MCF 10A (cell line): ENCODE measurements at regions of chr21 and their contacts with region 1.

Region 1: GRCh38 chr21:41630249-41630648 is 122.3 kb upstream of the TMPRSS2 start:
- DNase-seq: peak; percentile 100
- H3K4me3 Mint-ChIP-seq: peak overlapping the region; percentile 12
- H3K27ac Mint-ChIP-seq: peak overlapping the region; percentile 50
- H3K4me1 Mint-ChIP-seq: peaks cover 31% of the 10 kb centered on the region
- H3K27me3 Mint-ChIP-seq: no peaks in the 10 kb centered on the region
- CTCF ChIP-seq: no peak

Region 2: DNA sequence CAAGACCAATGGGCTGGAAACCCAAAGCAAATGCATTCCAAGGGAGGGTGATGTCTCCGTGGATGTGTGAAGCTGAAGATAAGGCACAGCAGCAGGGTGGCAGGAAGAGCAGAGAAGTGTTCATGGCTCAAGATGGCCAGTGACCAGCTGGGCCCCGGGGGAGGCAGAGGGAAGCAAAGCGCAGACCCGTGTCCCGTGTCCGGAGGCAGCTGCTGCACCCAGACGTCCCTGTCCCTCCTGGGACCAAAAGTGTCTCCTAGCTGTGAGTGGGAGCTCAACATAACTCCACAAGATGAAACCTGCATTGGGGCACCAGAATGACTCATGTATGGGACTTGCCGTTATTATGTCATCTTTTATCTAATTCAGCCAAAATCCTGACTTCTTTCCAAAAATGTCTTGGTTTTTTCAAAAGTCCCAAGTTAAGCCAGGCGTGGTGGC is 18.4 kb after region 1 on chr21:
- CTCF ChIA-PET with region 1: interaction called, 8 read pairs
- POLR2A ChIA-PET with region 1: interaction called, 30 read pairs
- intact Hi-C with region 1: no loop called
- DNase-seq: peak; percentile 80
- H3K4me3 Mint-ChIP-seq: no peak overlapping the region
- H3K27ac Mint-ChIP-seq: no peak overlapping the region
- H3K4me1 Mint-ChIP-seq: peaks cover 33% of the 10 kb centered on the region
- H3K27me3 Mint-ChIP-seq: no peaks in the 10 kb centered on the region
- CTCF ChIP-seq: no peak

Region 3: DNA sequence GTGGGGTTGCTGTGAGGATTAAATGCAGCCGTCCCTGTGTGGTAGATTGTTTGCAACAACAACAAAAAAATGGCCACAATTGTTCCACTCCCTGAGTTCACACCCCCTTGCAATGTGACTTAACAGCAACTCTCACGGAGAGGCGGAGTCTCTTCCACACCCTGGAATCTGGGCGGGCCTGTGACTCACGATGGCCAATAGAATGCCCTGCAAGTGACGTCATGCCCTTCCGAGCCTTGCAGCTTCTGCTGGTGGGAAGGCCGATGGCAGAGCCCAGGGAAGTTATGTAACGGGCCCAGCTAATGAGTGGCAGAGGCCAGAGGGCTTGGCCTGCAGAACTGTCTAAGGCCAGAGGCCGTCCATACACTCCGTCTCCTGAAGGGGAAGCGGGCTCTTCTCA is 48.7 kb after region 1 on chr21:
- CTCF ChIA-PET with region 1: interaction called, 16 read pairs
- POLR2A ChIA-PET with region 1: interaction called, 66 read pairs
- intact Hi-C with region 1: loop called (anchors 5 kb)
- DNase-seq: peak; percentile 100
- H3K4me3 Mint-ChIP-seq: peak overlapping the region; percentile 60
- H3K27ac Mint-ChIP-seq: peak overlapping the region; percentile 87
- H3K4me1 Mint-ChIP-seq: peaks cover 36% of the 10 kb centered on the region
- H3K27me3 Mint-ChIP-seq: no peaks in the 10 kb centered on the region
- CTCF ChIP-seq: no peak

Region 4: GRCh38 chr21:41715649-41716281 is 85.5 kb after region 1 on chr21:
- CTCF ChIA-PET with region 1: no interaction called
- POLR2A ChIA-PET with region 1: interaction called, 17 read pairs
- intact Hi-C with region 1: no loop called
- DNase-seq: peak; percentile 69
- H3K4me3 Mint-ChIP-seq: no peak overlapping the region
- H3K27ac Mint-ChIP-seq: peak overlapping the region; percentile 87
- H3K4me1 Mint-ChIP-seq: peaks cover 23% of the 10 kb centered on the region
- H3K27me3 Mint-ChIP-seq: no peaks in the 10 kb centered on the region
- CTCF ChIP-seq: no peak

Region 5: DNA sequence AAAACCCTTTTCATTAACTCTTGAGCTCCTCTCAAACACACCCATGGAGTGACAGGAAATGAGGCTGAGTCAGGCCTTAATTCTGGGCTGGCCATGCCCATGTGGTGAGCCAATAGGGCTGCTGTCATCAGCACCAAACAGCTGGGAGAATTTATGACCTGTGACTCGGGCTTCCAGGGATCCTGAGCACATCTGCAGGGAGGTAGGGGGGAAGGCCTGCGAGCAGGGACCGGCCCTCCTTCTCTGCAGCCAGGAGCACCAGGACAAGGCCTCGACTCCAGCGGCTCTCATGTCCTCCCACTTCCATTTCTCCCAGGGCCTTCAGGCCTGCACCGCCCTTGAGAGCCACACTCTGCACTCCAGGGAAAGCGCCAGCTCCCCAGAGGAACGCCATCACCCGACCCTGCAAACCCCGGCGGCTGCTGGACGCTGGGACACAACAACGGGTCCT is 122.0 kb after region 1 on chr21:
- CTCF ChIA-PET with region 1: no interaction called
- POLR2A ChIA-PET with region 1: interaction called, 12 read pairs
- intact Hi-C with region 1: no loop called
- DNase-seq: peak; percentile 84
- H3K4me3 Mint-ChIP-seq: peak overlapping the region; percentile 64
- H3K27ac Mint-ChIP-seq: peak overlapping the region; percentile 87
- H3K4me1 Mint-ChIP-seq: peaks cover 32% of the 10 kb centered on the region
- H3K27me3 Mint-ChIP-seq: no peaks in the 10 kb centered on the region
- CTCF ChIP-seq: no peak

Region 6: DNA sequence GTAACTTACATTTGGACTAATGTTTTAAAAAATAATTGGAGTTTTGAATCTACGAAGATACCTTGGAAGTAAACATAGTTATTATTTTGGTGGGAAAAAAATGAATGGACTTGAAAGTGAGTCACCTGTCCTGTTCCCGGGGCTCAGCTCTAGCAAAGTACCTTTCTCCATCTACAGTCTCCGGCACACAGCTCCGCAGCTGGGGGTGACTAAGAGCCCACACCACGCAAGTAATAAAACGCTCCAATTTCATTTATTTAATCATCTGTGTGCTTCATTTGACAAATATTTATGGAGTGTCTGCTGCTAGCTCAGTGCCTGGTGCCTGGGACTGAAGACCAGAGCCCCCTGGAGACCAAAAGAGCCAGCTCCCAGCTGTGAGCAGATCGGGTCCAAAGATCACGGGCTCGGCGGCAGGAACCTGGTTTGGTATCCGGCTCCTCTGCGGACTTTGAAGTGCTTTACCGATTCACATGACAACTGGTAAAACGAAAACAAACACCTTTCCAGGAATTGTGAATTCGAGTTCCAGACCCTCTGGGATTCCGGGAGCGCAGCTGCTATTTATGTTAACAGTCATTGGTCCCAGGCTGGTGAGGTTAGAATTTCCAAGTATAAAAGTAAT is 138.3 kb after region 1 on chr21:
- CTCF ChIA-PET with region 1: interaction called, 6 read pairs
- POLR2A ChIA-PET with region 1: interaction called, 145 read pairs
- intact Hi-C with region 1: loop called (anchors 1 kb)
- DNase-seq: peak; percentile 72
- H3K4me3 Mint-ChIP-seq: peak overlapping the region; percentile 87
- H3K27ac Mint-ChIP-seq: peak overlapping the region; percentile 87
- H3K4me1 Mint-ChIP-seq: peaks cover 25% of the 10 kb centered on the region
- H3K27me3 Mint-ChIP-seq: no peaks in the 10 kb centered on the region
- CTCF ChIP-seq: peak; percentile 28